IMR-90 (cell line): ENCODE measurements at regions of chr3 and their contacts with region 1.

Region 1: DNA sequence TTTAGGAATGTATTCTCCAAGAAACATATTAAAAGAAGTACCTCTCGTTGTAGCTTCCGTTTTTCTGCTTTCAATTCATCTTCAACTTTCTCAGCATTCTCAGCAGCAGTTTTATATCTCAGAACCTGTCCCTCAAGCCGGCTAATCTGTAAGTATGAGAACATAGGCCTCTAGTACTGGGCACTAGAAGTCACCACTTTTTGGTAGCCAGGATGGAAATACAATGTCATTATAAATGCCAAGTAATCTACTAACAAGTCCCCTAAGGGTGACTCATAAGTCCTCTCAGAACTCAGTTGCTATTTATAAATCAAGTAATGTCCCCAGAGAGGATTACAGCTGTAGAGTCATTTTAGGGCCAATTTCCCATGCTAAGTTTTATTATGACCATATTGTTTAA is 61.1 kb downstream of the MLH1 start:
- DNase-seq: peak; percentile 46
- ATAC-seq: peak; percentile 52
- H3K4me3 ChIP-seq: no peak overlapping the region
- H3K27ac ChIP-seq: no peak overlapping the region
- H3K4me1 ChIP-seq: peaks cover 13% of the 10 kb centered on the region
- H3K27me3 ChIP-seq: no peaks in the 10 kb centered on the region
- CTCF ChIP-seq: no peak
- POLR2A ChIP-seq: no peak
- RAD21 ChIP-seq: no peak

Region 2: DNA sequence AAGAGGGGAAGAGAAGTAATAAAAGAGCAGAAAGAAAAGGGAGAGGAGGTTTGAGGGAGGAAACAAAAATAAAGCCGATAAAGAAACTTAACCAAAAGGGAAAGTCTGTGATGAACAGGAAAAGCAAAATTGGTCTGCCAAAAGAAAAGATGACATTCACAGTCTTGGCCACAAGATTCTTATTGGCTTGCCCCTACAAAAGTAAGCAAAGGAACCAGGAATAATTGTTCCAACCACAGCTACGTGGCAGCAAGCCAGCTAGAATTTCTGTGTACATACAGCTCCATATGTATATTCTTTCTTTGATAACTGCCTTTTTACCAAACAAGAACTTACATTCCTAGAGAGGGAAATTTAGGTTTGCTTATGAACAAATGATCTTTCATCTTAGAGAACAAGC is 18.5 kb after region 1 on chr3:
- CTCF ChIA-PET with region 1: interaction called, 4 read pairs
- POLR2A ChIA-PET with region 1: no interaction called
- dilution Hi-C with region 1: no loop called
- in situ Hi-C with region 1: no loop called
- intact Hi-C with region 1: loop called (anchors 2 kb)
- DNase-seq: peak; percentile 93
- ATAC-seq: peak; percentile 61
- H3K4me3 ChIP-seq: peak overlapping the region; percentile 39; the same call in 1 of the 2 replicates
- H3K27ac ChIP-seq: peak overlapping the region; percentile 87
- H3K4me1 ChIP-seq: peaks cover 12% of the 10 kb centered on the region
- H3K27me3 ChIP-seq: no peaks in the 10 kb centered on the region
- CTCF ChIP-seq: no peak
- POLR2A ChIP-seq: no peak
- RAD21 ChIP-seq: no peak

Region 3: GRCh38 chr3:37129871-37130270 is 75.5 kb after region 1 on chr3:
- CTCF ChIA-PET with region 1: no interaction called
- POLR2A ChIA-PET with region 1: no interaction called
- dilution Hi-C with region 1: no loop called
- in situ Hi-C with region 1: no loop called
- intact Hi-C with region 1: no loop called
- DNase-seq: peak; percentile 71
- ATAC-seq: peak; percentile 63; the same call in 1 of the 2 replicates
- H3K4me3 ChIP-seq: no peak overlapping the region
- H3K27ac ChIP-seq: no peak overlapping the region
- H3K4me1 ChIP-seq: peaks cover 6% of the 10 kb centered on the region
- H3K27me3 ChIP-seq: no peaks in the 10 kb centered on the region
- CTCF ChIP-seq: no peak
- POLR2A ChIP-seq: no peak
- RAD21 ChIP-seq: no peak

Region 4: DNA sequence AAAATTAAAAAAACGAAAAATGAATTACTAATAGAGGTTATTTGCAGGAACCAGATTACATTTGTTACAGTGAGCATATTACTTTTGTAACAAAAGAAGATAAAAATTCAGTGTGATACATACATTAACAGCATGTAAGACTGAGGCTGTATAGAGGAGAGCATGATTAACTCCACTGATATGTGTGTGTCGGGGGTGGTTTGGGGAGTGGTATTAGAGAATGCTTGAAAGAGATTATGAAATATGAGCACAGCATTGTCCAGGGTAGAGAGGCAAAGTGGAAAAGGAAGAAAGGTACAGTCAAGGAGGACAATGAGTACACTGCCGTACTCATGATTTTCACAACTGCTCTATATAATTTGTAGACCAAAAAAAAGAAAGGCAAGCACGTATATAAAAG is 182.9 kb after region 1 on chr3:
- CTCF ChIA-PET with region 1: interaction called, 11 read pairs
- POLR2A ChIA-PET with region 1: no interaction called
- dilution Hi-C with region 1: no loop called
- in situ Hi-C with region 1: no loop called
- intact Hi-C with region 1: no loop called
- DNase-seq: peak; percentile 55
- ATAC-seq: no peak
- H3K4me3 ChIP-seq: no peak overlapping the region
- H3K27ac ChIP-seq: no peak overlapping the region
- H3K4me1 ChIP-seq: peaks cover 2% of the 10 kb centered on the region; the same call in 1 of the 2 replicates
- H3K27me3 ChIP-seq: no peaks in the 10 kb centered on the region
- CTCF ChIP-seq: no peak
- POLR2A ChIP-seq: no peak
- RAD21 ChIP-seq: no peak